ENCODE measurements at regions of chr9 and their contacts with region 1.

Region 1: GRCh38 chr9:22452415-22453010 is 5.9 kb downstream of the DMRTA1 start:
- DNase-seq: peak; percentile 17 to 65
- H3K4me3 ChIP-seq: no peak overlapping the region
- H3K4me1 ChIP-seq: peaks cover 4% of the 10 kb centered on the region; the same call in 1 of the 2 replicates
- H3K27me3 ChIP-seq: no peaks in the 10 kb centered on the region

Region 2: GRCh38 chr9:22307013-22307711 is 145.4 kb before region 1 on chr9:
- in situ Hi-C with region 1: loop called (anchors 10 kb)
- DNase-seq: peak; percentile 46 to 59
- H3K4me3 ChIP-seq: no peak overlapping the region
- H3K4me1 ChIP-seq: no peaks in the 10 kb centered on the region
- H3K27me3 ChIP-seq: no peaks in the 10 kb centered on the region; the same call in 1 of the 2 replicates

Measured in HAP-1 (cell line).